ENCODE measurements at regions of chr3 and their contacts with region 1.

Region 1: DNA sequence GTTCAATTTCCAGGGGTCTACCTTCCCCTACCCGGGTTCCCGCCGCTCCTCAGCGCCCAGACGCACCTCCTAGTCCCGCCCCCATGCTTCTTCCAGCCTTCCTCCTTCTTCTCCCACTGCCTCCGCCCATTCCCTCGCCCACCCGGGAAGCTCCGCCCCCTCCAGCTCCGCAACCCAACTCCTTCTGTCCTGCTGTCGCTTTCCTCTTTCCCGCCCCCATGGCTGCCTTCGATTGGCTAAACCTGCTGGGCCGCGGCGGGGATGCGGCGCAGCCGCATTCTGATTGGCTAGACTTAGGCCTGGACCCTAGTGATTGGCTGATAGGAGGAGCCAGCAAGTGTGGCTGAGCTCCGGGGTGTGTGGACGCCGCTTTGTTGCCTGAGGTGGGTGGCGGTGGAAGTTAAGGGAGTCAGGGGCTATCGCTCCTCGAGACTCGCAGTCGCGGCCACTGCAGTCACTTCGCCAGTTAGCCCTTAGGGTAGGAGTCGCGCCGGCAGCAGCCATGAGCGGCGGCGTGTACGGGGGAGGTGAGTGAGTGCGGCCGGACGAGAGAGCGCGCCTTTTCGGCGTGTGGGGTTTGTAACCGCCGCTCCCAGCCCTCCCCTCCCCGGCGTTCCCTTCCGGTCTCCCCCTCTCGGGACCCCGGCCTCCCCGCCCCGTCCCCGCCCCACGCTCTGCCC is at the start of gene ACTL6A:
- DNase-seq: peak; percentile 99
- H3K4me3 Mint-ChIP-seq: peak within 1 kb of the TSS; percentile 97
- H3K27ac Mint-ChIP-seq: peak within 1 kb of the TSS; percentile 96
- H3K4me1 Mint-ChIP-seq: peaks cover 28% of the 10 kb centered on the region
- H3K27me3 Mint-ChIP-seq: peaks cover 2% of the 10 kb centered on the region
- total RNA-seq, gene ACTL6A: 89.2 to 90.0 TPM

Region 2: GRCh38 chr3:179021119-179021903 is 541.4 kb before region 1 on chr3:
- CTCF ChIA-PET with region 1: no interaction called
- intact Hi-C with region 1: loop called (anchors 1 kb)
- DNase-seq: no peak
- H3K4me3 Mint-ChIP-seq: peak overlapping the region; percentile 37
- H3K27ac Mint-ChIP-seq: peak overlapping the region; percentile 27
- H3K4me1 Mint-ChIP-seq: peaks cover 39% of the 10 kb centered on the region
- H3K27me3 Mint-ChIP-seq: no peaks in the 10 kb centered on the region

Region 3: GRCh38 chr3:179322286-179323196 is 240.2 kb before region 1 on chr3 and contains the start of gene ZNF639:
- CTCF ChIA-PET with region 1: interaction called, 3 read pairs
- intact Hi-C with region 1: loop called (anchors 1 kb)
- DNase-seq: peak; percentile 78
- H3K4me3 Mint-ChIP-seq: peak within 1 kb of the TSS; percentile 89
- H3K27ac Mint-ChIP-seq: peak within 1 kb of the TSS; percentile 93
- H3K4me1 Mint-ChIP-seq: peaks cover 26% of the 10 kb centered on the region
- H3K27me3 Mint-ChIP-seq: no peaks in the 10 kb centered on the region
- total RNA-seq, gene ZNF639: 23.3 to 26.0 TPM

Region 4: GRCh38 chr3:179446501-179446900 is 116.2 kb before region 1 on chr3:
- CTCF ChIA-PET with region 1: no interaction called
- intact Hi-C with region 1: loop called (anchors 1 kb)
- DNase-seq: no peak
- H3K4me3 Mint-ChIP-seq: no peak overlapping the region
- H3K27ac Mint-ChIP-seq: no peak overlapping the region
- H3K4me1 Mint-ChIP-seq: peaks cover 9% of the 10 kb centered on the region
- H3K27me3 Mint-ChIP-seq: peaks cover 45% of the 10 kb centered on the region

Region 5: DNA sequence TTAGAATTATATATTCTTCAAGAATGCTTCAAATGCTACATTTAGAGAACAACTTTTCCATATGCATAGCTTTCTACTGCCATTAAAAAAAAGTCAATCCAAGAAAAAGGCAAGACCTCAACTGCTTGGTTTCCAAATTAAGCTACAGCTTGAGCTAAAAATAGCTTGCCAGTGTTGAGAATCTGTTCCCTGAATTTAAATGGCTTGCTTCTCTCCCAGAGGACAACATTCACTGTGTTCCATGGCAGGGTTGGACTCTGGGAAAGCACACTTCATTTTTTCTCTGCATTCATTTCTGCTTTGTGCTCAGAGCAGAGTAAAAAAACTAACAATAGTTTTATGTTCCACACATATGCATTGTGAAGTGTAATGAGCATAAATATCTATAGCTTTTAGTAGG is 50.4 kb before region 1 on chr3:
- CTCF ChIA-PET with region 1: no interaction called
- intact Hi-C with region 1: no loop called
- DNase-seq: no peak
- H3K4me3 Mint-ChIP-seq: no peak overlapping the region
- H3K27ac Mint-ChIP-seq: no peak overlapping the region
- H3K4me1 Mint-ChIP-seq: no peaks in the 10 kb centered on the region
- H3K27me3 Mint-ChIP-seq: peaks cover 12% of the 10 kb centered on the region

Region 6: DNA sequence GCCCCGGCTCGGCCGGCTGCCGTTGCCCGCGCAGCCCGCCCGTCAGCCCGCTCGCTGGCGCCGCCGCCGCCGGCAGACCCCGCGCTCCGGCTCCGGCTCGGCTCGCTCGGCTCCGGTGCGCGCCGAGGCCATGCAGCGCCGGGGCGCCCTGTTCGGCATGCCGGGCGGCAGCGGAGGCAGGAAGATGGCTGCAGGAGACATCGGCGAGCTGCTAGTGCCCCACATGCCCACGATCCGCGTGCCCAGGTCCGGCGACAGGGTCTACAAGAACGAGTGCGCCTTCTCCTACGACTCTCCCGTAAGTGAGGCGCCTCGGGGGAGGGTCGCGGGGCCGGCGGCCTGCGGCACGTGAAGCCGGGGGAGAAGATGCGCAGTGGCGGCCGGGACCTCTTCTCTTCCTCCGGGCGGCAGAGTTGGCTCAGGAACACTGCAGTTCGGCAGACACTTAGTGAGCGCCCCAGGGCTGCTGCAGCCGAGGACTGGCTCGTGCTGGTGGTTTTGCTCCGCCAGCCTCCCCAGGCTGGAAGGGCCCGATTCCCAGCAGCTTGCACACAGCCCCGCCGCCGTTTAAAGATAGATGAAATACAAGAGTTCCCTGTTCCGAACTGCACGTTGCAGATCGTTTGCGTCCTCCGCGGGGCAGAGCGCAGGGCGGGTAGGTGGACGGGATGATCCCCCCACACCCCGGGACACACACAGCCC is 90.5 kb after region 1 on chr3:
- CTCF ChIA-PET with region 1: no interaction called
- intact Hi-C with region 1: loop called (anchors 2 kb)
- DNase-seq: peak; percentile 72
- H3K4me3 Mint-ChIP-seq: peak overlapping the region; percentile 85
- H3K27ac Mint-ChIP-seq: peak overlapping the region; percentile 67
- H3K4me1 Mint-ChIP-seq: peaks cover 17% of the 10 kb centered on the region
- H3K27me3 Mint-ChIP-seq: peaks cover 8% of the 10 kb centered on the region